ENCODE measurements at regions of chr12 and their contacts with region 1.

Region 1: DNA sequence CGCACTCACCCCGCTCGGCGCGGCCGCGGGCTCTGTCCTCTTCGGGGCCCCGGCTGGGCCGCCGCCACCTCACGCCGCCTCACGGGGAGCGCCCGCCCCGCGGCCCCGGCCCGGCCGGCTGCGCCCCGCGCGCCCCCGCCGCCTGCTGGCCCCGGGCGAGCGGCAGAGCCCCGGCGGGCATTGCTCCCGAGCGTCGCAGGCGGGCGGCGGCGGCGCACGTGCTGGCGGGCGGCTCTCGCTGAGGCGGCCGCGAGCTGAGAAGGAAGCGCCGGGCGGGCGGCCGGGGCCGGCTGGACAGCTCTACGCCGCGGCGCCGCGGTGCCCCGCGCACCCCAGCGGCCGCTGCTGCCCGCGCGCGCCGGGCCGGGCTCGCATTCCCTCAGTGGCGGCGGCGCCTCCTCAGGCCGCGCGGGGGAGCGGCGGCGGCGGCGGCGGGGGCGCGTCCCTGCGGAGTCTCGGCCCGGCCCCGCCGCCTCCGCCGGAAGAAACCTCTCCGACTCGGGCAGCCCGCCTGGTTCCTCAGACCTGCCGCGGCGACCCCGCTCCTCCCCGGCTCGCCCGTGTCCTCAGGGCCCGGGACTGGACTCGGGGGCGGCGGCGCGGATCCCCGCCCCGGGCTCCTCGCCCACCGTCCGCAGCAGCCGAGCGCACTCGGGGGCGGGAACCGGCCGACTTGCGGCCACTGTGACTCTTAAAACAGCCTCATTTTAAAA is at the start of gene PITPNM2:
- DNase-seq: peak; percentile 55
- H3K4me3 Mint-ChIP-seq: peak within 1 kb of the TSS; percentile 84
- H3K27ac Mint-ChIP-seq: peak within 1 kb of the TSS; percentile 78
- H3K4me1 Mint-ChIP-seq: peaks cover 20% of the 10 kb centered on the region
- H3K27me3 Mint-ChIP-seq: peaks cover 20% of the 10 kb centered on the region
- total RNA-seq, gene PITPNM2: 15.5 and 16.2 TPM in 2 replicates

Region 2: DNA sequence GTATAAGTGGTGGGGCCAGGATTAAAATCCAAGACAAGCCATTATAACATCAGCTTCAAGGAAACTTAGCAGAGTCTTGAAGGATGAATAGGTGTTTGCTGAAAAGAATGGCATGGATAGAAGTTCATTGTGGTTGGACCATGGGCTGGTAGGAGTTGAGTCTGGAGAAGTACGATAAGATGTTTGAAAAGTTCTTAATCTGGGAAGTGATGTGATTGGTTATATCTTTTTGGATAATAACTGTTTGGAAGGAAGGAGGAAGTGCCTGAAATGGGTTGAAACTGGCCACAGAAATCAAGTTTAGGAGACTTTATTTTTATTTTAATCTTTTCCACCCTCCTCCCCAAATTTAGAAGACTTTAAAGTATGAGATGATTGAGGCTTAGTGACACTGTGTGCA is 393.3 kb before region 1 on chr12:
- intact Hi-C with region 1: no loop called
- DNase-seq: no peak
- H3K4me3 Mint-ChIP-seq: no peak overlapping the region
- H3K27ac Mint-ChIP-seq: peak overlapping the region; percentile 40
- H3K4me1 Mint-ChIP-seq: peaks cover 35% of the 10 kb centered on the region
- H3K27me3 Mint-ChIP-seq: no peaks in the 10 kb centered on the region

Region 3: DNA sequence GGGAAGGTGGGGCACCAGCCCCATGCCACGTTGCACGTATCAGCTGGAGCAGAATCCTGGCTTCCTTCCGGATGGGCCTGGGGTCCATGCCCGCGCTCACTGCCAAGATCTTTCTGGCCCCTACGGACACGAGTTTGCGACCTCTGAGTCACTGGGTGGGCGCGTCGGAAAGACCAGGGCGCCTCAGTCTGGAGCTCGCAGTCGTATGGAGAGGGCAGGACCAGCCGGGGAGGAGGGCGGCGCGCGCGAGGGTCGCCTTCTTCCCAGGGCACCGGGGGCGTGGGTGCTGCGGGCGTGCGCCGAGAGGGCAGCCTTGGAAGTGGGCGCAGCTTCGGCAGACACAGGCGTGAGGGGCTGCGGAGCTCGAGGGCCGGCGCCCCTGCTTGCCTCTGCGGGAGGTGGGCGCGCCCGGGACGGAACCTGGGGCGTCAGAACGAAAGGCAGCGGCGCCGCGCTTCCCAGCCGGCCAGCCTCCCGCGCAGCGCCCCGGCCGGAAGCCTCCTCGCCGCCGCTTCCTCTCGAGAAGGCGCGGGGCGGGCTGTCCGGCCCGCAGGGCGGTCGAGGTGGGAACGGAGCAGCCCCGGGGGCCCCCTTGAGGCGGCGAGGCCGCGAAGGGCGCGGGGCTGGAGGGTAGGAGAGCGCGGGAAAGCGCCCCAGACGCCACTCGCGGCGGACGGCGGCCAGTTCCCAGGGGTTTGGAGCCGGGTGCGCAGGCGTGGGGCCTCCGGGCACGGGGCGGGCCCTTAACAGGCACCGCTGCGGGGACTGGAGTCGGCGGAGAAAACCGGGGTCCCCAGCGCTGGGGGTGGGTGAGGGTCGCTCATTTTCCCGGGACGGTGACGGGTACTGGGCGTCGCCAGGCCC is 170.5 kb before region 1 on chr12 and contains the start of gene ARL6IP4:
- intact Hi-C with region 1: loop called (anchors 1 kb)
- DNase-seq: peak; percentile 54
- H3K4me3 Mint-ChIP-seq: peak within 1 kb of the TSS; percentile 90
- H3K27ac Mint-ChIP-seq: peak within 1 kb of the TSS; percentile 85
- H3K4me1 Mint-ChIP-seq: peaks cover 31% of the 10 kb centered on the region
- H3K27me3 Mint-ChIP-seq: no peaks in the 10 kb centered on the region
- total RNA-seq, gene ARL6IP4: 161 and 168 TPM in 2 replicates

Region 4: GRCh38 chr12:123043536-123044001 is 107.3 kb before region 1 on chr12:
- intact Hi-C with region 1: loop called (anchors 1 kb)
- DNase-seq: peak; percentile 56
- H3K4me3 Mint-ChIP-seq: no peak overlapping the region
- H3K27ac Mint-ChIP-seq: peak overlapping the region; percentile 56
- H3K4me1 Mint-ChIP-seq: peaks cover 16% of the 10 kb centered on the region
- H3K27me3 Mint-ChIP-seq: no peaks in the 10 kb centered on the region

Region 5: GRCh38 chr12:123139926-123140675 is 10.8 kb before region 1 on chr12:
- intact Hi-C with region 1: loop called (anchors 1 kb)
- DNase-seq: no peak
- H3K4me3 Mint-ChIP-seq: no peak overlapping the region
- H3K27ac Mint-ChIP-seq: no peak overlapping the region
- H3K4me1 Mint-ChIP-seq: peaks cover 9% of the 10 kb centered on the region
- H3K27me3 Mint-ChIP-seq: no peaks in the 10 kb centered on the region

Region 6: DNA sequence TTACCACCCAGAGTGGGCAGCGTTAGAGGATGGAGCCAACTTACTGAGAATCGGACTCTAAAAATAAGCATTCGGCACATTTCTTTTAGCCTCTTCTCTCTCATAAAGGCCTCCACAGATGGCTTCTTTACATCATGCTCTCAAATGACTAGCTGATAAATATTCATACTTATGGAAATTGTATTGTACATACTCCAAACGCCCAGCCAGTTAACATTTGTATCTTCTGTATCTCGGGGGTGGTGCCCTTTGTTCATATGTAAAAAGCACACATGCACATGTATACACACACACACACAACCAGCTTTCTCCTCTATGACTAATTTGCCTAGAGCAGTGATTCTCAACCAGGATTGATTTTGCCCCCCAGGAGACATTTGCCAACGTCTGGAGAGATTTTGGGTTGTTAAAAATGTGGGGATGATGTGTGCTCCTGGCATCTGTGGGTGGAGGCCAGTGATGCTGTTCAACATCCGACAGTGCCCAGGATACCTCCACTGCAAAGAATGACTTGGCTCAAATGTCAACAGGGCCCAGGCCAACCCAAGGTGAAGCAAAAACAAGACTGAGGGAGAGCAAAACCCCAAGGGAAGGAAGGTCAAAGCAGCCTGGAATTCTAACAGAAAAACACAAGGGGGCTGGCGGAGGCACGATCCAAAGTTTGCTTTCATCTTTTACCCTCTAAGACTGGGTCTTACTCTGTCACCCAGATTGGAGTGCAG is 135.9 kb after region 1 on chr12:
- intact Hi-C with region 1: no loop called
- DNase-seq: no peak
- H3K4me3 Mint-ChIP-seq: no peak overlapping the region
- H3K27ac Mint-ChIP-seq: peak overlapping the region; percentile 22
- H3K4me1 Mint-ChIP-seq: no peaks in the 10 kb centered on the region
- H3K27me3 Mint-ChIP-seq: no peaks in the 10 kb centered on the region